Uterus (tissue), 4 donors: ENCODE measurements at regions of chr1 and their contacts with region 1.

Region 1: GRCh38 chr1:172398970-172399755 is 21.3 kb upstream of the C1orf105 start:
- DNase-seq: peak; percentile 73 to 84
- H3K4me3 ChIP-seq: peak overlapping the region in 1 of 2 donors; percentile 11
- H3K27ac ChIP-seq: peak overlapping the region; percentile 78 to 89
- H3K4me1 ChIP-seq: peaks cover 0 to 21% of the 10 kb centered on the region in 2 donors
- H3K27me3 ChIP-seq: no peaks in the 10 kb centered on the region
- CTCF ChIP-seq: peak; percentile 64 to 79 (median 70)
- POLR2A ChIP-seq: no peak

Region 2: GRCh38 chr1:172041742-172042141 is 357.4 kb before region 1 on chr1:
- intact Hi-C with region 1: loop called (anchors 10 kb)
- DNase-seq: peak in 1 of 2 donors; percentile 35
- H3K4me3 ChIP-seq: peak overlapping the region in 1 of 2 donors; percentile 23
- H3K27ac ChIP-seq: peak overlapping the region; percentile 41 to 48
- H3K4me1 ChIP-seq: no peaks in the 10 kb centered on the region
- H3K27me3 ChIP-seq: no peaks in the 10 kb centered on the region
- CTCF ChIP-seq: peak; percentile 56 to 83 (median 68)
- POLR2A ChIP-seq: no peak

Region 3: DNA sequence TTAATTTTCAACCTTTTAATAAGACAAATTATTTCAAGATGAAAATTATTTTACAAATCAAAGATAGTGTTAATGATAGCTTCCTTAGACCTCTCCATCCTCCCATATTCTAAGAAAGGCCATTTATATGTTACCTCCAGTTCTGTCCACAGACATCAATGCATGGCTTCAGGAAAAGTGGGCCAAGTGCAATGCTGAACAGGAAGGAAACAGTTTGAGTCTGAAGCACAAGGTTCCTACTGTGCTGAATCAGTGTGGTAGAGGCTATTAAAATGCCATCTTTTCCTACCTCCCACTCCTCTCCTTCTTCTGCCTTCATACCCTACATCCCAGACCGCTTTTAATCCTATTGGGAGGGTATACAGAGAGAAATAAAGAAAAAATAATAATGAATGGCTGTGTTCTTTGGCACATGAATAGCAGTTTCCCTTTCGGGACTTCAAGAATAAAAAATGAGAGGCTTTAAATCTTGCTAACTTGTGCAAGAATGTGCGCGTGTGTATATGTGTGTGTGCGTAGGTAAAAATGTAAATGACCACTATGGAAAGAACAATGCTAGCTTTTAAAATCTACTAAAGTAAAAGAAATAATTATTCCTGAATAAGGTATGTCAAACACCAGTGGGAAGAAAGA is 41.3 kb before region 1 on chr1:
- intact Hi-C with region 1: loop called (anchors 5 kb)
- DNase-seq: peak in 1 of 2 donors; percentile 32
- H3K4me3 ChIP-seq: peak overlapping the region in 1 of 2 donors; percentile 10
- H3K27ac ChIP-seq: peak overlapping the region; percentile 80 to 88
- H3K4me1 ChIP-seq: peaks cover 8 to 17% of the 10 kb centered on the region in 2 donors
- H3K27me3 ChIP-seq: no peaks in the 10 kb centered on the region
- CTCF ChIP-seq: no peak
- POLR2A ChIP-seq: no peak